MCF 10A (cell line): ENCODE measurements at regions of chr11 and their contacts with region 1.

Region 1: DNA sequence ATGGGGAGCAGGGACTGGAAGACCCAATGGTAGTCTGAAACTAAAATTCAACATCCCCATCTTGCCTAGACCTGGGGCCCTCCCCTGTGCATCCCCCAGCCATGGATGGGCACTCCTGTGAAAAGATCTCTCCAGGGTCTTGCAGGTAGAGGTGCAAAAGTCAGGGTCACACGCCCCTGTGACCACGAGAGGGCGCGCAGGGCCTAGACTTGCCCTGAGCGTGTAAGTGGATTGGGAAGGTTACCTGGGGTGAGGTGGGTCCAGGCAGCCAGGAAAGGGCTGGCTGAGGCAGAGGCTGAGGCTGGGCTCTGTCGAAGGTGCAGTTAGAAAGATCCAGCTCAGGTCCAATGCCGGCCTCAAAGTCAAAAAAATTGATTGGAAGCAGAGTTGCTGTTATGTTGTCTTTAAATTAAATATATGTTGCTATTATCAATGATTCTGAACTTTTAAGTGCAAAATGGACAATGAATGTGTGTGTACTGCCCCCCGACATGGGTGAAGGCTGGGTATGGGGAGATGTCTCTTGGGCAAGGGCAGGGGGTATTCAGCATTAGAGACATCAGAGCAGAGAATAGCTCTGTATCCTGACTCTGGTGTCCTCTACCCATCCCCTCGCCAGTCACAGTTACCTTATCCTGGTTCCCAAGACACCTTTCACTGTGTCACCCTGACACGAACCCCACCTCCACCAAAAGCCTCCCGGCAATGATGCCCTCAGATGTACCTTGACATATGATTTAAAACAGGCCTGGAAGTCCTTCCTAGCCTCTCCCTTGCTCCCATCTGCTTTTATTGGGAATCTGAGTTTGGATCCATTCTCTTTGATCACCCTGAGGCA is 4.7 kb upstream of the POU2F3 start:
- DNase-seq: peak; percentile 75
- H3K4me3 Mint-ChIP-seq: no peak overlapping the region
- H3K27ac Mint-ChIP-seq: no peak overlapping the region
- H3K4me1 Mint-ChIP-seq: no peaks in the 10 kb centered on the region
- H3K27me3 Mint-ChIP-seq: peaks cover 28% of the 10 kb centered on the region
- CTCF ChIP-seq: peak; percentile 89

Region 2: GRCh38 chr11:120172054-120172911 is 63.0 kb before region 1 on chr11:
- CTCF ChIA-PET with region 1: interaction called, 220 read pairs
- POLR2A ChIA-PET with region 1: interaction called, 3 read pairs
- intact Hi-C with region 1: no loop called
- DNase-seq: peak; percentile 70
- H3K4me3 Mint-ChIP-seq: no peak overlapping the region
- H3K27ac Mint-ChIP-seq: no peak overlapping the region
- H3K4me1 Mint-ChIP-seq: no peaks in the 10 kb centered on the region
- H3K27me3 Mint-ChIP-seq: peaks cover 58% of the 10 kb centered on the region
- CTCF ChIP-seq: peak; percentile 87

Region 3: DNA sequence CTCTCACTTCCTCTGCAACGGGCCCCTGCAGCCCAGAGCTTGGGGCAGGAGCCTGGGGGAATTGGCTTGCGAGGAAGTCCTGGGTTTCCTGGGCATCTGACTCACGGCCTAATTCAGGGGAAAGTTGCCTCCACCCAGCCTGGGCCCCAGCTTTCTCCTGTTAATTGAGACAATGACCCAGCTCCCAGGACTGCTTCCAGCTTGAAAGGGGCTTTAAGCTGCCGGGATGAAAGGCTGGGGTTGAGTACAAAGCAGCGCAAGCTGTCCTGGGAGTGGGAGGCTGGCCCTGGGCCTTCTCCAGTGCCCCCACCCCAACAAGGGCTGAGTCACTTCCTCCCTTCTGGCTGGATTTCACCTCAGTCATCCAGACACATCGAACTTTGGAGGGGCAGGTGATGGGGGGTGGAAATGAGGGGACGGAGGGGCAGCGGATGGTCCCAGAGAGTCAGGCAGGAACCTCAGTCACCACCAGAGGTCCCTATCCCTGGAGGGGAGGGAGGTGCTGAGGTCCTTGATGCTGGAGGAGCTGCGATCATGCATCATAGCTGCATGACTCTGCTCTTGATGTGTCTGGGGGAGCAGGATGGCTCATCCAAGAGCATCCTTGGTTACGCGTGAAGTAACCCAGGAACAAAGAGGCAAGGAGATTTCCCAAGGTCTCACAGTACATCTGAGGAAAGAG is 54.6 kb before region 1 on chr11:
- CTCF ChIA-PET with region 1: interaction called, 220 read pairs
- POLR2A ChIA-PET with region 1: interaction called, 3 read pairs
- intact Hi-C with region 1: no loop called
- DNase-seq: no peak
- H3K4me3 Mint-ChIP-seq: no peak overlapping the region
- H3K27ac Mint-ChIP-seq: no peak overlapping the region
- H3K4me1 Mint-ChIP-seq: peaks cover 6% of the 10 kb centered on the region
- H3K27me3 Mint-ChIP-seq: peaks cover 16% of the 10 kb centered on the region
- CTCF ChIP-seq: no peak

Region 4: DNA sequence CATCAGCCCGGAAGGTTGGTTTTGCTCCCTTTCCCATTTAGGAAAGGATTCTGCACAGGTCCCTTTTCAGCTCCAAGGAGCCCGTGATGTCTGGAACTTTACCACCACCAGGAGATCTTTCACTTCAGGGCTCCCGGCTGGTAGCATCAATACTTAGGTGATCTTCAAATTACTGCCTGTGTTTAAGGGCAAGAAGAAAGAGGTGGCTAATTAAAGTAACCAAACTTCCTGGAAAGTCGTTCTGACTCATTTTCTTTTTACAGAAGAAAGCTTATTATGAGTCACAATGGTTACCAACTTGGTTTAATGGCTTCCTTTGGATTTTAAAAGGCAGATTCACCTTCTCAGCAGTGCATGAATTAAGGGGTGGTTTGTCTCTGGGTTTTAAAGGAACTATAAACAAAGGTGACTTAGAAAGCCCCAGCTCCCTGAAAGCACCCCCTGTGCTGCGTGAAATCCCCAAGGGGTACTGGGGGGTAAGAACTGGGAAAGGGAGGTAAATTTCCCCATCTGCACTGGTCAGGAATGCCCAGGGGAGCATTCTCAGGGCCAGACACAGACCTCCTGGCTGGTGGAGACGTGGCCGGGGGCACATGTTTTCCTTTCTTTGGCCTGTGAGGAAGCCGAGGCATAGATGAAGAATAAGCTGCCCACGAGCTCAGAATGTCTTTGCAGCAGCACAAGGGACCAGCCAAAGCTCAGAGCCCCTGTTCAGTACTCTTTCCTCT is 13.5 kb after region 1 on chr11:
- CTCF ChIA-PET with region 1: interaction called, 39 read pairs
- POLR2A ChIA-PET with region 1: interaction called, 4 read pairs
- intact Hi-C with region 1: no loop called
- DNase-seq: peak; percentile 53
- H3K4me3 Mint-ChIP-seq: no peak overlapping the region
- H3K27ac Mint-ChIP-seq: no peak overlapping the region
- H3K4me1 Mint-ChIP-seq: no peaks in the 10 kb centered on the region
- H3K27me3 Mint-ChIP-seq: peaks cover 9% of the 10 kb centered on the region
- CTCF ChIP-seq: no peak

Region 5: DNA sequence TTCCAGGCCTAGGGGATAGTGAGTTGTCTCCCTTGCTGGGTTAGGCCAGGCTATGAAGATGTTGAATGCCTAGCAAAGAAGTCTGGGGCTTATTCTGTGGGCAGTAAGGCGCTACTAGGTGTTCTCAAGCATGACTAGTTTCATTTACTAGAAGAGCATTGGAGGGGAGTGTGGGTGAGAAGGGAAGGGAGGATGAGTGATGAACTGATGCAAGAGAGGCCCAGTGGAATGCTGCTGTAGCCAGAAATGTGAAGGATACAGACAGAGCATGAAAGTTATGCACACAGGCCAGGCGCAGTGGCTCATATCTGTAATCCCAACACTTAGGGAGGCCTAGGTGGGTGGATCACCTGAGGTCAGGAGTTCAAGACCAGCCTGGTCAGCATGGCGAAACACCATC is 38.2 kb after region 1 on chr11:
- CTCF ChIA-PET with region 1: interaction called, 11 read pairs
- POLR2A ChIA-PET with region 1: interaction called, 3 read pairs
- intact Hi-C with region 1: no loop called
- DNase-seq: no peak
- H3K4me3 Mint-ChIP-seq: no peak overlapping the region
- H3K27ac Mint-ChIP-seq: no peak overlapping the region
- H3K4me1 Mint-ChIP-seq: no peaks in the 10 kb centered on the region
- H3K27me3 Mint-ChIP-seq: peaks cover 27% of the 10 kb centered on the region
- CTCF ChIP-seq: no peak

Region 6: DNA sequence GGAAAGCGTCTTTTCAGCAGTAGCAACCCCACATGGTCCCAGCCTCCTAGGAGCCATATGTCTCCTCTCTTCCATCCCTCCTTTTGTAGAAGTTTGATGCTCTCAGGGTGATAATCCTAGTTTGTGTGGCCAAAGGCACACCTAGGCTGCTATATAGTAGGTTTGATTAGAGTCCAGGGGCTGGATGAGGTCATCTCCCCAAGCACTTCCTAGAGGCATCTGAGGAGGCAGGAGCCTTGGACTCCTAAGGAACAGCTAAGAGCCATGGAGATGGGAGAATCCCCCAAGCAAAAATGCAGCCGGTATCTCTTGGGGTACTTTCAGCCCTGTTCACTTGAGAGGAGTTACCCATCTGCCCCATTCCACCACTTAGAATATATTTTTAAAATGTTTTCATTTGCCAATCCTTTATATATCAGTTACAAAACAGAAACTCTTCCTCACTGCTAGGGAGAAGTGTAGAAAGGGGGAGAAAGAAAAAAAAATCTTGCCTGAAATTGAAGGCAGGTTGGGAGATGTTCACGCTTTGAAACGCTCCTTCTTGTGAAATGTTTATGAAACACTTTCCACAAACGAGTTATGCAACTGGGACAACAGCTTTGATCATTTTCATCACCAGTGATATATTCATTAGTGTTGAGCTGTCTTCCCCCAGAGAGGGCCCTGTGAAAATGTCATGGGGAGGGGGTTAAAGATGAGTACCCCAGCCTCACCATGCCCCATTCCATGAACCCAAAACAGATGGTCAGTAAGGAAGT is 58.0 kb after region 1 on chr11:
- CTCF ChIA-PET with region 1: interaction called, 526 read pairs
- POLR2A ChIA-PET with region 1: interaction called, 4 read pairs
- intact Hi-C with region 1: no loop called
- DNase-seq: no peak
- H3K4me3 Mint-ChIP-seq: no peak overlapping the region
- H3K27ac Mint-ChIP-seq: no peak overlapping the region
- H3K4me1 Mint-ChIP-seq: no peaks in the 10 kb centered on the region
- H3K27me3 Mint-ChIP-seq: peaks cover 57% of the 10 kb centered on the region
- CTCF ChIP-seq: no peak

Region 7: GRCh38 chr11:120622189-120622875 is 387.1 kb after region 1 on chr11:
- CTCF ChIA-PET with region 1: no interaction called
- POLR2A ChIA-PET with region 1: no interaction called
- intact Hi-C with region 1: no loop called
- DNase-seq: peak; percentile 18
- H3K4me3 Mint-ChIP-seq: no peak overlapping the region
- H3K27ac Mint-ChIP-seq: no peak overlapping the region
- H3K4me1 Mint-ChIP-seq: no peaks in the 10 kb centered on the region
- H3K27me3 Mint-ChIP-seq: peaks cover 26% of the 10 kb centered on the region
- CTCF ChIP-seq: no peak

Region 8: DNA sequence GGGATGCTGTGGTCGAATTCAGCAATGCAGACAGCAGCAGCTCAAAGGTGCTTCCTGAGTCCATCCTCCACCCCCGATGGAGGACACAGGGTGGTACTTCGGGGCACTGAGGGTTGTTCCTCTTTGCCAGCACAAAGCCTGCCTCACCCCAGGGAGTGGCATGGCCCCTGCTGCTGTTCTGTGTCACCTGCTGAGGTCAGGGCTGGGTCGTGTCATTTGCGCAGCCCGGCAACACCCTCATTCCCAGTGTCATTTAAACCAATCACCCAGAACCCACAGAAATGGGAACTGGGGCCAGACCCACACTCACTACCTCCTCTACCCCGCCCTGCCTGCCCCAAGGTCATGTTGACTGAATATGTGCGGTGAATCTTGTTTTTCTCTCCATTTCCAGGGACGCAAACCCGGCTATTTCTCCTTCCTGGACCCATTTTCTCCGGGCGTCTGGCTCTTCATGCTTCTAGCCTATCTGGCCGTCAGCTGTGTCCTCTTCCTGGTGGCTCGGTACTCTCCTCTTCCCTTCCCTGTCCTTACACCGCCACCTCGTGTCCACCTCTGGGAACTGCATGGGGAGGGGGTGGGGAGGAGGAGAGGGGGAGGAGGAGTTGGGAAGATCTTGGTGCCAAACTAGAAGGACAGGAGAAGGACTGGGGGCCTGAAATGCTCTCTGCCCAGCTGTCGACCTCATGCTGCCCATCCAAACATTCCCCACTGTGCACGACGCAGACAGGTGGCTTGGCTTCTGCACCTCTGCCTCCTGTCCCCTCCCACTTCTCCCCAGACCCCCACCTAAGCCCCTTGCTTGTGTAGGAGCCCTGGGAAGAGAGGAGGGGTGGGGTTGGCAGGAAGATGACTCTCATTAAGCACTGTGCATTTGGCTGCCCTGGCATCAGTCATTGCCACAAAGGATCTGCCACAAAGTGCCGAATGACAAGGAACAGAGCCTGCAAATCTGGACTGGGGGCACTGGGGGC is 717.5 kb after region 1 on chr11:
- CTCF ChIA-PET with region 1: interaction called, 6 read pairs
- POLR2A ChIA-PET with region 1: no interaction called
- intact Hi-C with region 1: loop called (anchors 5 kb)
- DNase-seq: peak; percentile 81
- H3K4me3 Mint-ChIP-seq: peak overlapping the region; percentile 49
- H3K27ac Mint-ChIP-seq: no peak overlapping the region
- H3K4me1 Mint-ChIP-seq: peaks cover 6% of the 10 kb centered on the region
- H3K27me3 Mint-ChIP-seq: peaks cover 54% of the 10 kb centered on the region
- CTCF ChIP-seq: peak; percentile 76